RWPE1 (cell line): ENCODE measurements at regions of chr5 and their contacts with region 1.

Region 1: GRCh38 chr5:95907067-95907705 is 54.5 kb downstream of the ELL2 start:
- DNase-seq: no peak
- H3K27ac ChIP-seq: no peak overlapping the region
- CTCF ChIP-seq: no peak

Region 2: GRCh38 chr5:95956021-95956899 is 49.1 kb after region 1 on chr5:
- CTCF ChIA-PET with region 1: no interaction called
- POLR2A ChIA-PET with region 1: no interaction called
- DNase-seq: no peak
- H3K27ac ChIP-seq: no peak overlapping the region
- CTCF ChIP-seq: no peak

Region 3: GRCh38 chr5:96324708-96325107 is 417.5 kb after region 1 on chr5:
- CTCF ChIA-PET with region 1: interaction called, 5 read pairs
- POLR2A ChIA-PET with region 1: interaction called, 11 read pairs
- DNase-seq: peak; percentile 58
- H3K27ac ChIP-seq: peak overlapping the region; percentile 28; the same call in 1 of the 2 replicates
- CTCF ChIP-seq: no peak